Vagina (tissue), 2 donors: ENCODE measurements at regions of chr18 and their contacts with region 1.

Region 1: GRCh38 chr18:27901424-27902226 is 275.3 kb downstream of the CDH2 start:
- DNase-seq: no peak
- H3K4me3 ChIP-seq: no peak overlapping the region
- H3K27ac ChIP-seq: no peak overlapping the region
- H3K4me1 ChIP-seq: no peaks in the 10 kb centered on the region
- H3K27me3 ChIP-seq: no peaks in the 10 kb centered on the region
- CTCF ChIP-seq: no peak
- POLR2A ChIP-seq: no peak

Region 2: GRCh38 chr18:27652480-27653121 is 249.0 kb before region 1 on chr18:
- intact Hi-C with region 1: no loop called
- DNase-seq: no peak
- H3K4me3 ChIP-seq: no peak overlapping the region
- H3K27ac ChIP-seq: no peak overlapping the region
- H3K4me1 ChIP-seq: no peaks in the 10 kb centered on the region
- H3K27me3 ChIP-seq: no peaks in the 10 kb centered on the region
- CTCF ChIP-seq: no peak
- POLR2A ChIP-seq: no peak

Region 3: DNA sequence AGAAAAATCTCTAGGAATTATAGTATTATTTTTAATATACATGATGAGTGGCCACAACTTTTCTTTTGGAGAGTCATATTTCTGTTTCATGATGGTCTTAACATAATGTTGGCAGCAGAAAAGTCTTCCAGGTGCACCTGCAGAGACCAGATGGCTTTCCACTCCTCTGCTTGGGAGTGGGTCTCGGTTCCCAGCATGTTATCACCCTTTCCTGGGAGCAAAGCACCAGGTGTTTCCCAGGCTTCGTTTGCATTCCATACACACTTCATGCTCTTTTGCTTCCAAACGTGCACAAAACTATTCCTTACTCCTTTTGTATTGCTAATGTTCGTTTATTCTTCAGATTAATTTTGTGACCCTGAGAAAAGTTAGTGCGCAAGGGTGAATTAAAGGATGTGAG is 29.9 kb before region 1 on chr18:
- intact Hi-C with region 1: loop called (anchors 1 kb)
- DNase-seq: no peak
- H3K4me3 ChIP-seq: no peak overlapping the region
- H3K27ac ChIP-seq: no peak overlapping the region
- H3K4me1 ChIP-seq: no peaks in the 10 kb centered on the region
- H3K27me3 ChIP-seq: no peaks in the 10 kb centered on the region
- CTCF ChIP-seq: no peak
- POLR2A ChIP-seq: no peak